HepG2 (cell line): ENCODE measurements at regions of chr5 and their contacts with region 1.

Region 1: GRCh38 chr5:140113699-140114263 is at the start of gene PURA:
- DNase-seq: peak; percentile 92
- ATAC-seq: peak; percentile 89
- H3K4me3 ChIP-seq: peak within 1 kb of the TSS; percentile 86 to 92 (median 89)
- H3K27ac ChIP-seq: peak within 1 kb of the TSS; percentile 88
- H3K4me1 ChIP-seq: peaks cover 73% of the 10 kb centered on the region
- H3K27me3 ChIP-seq: no peaks in the 10 kb centered on the region; a peak in 1 of 5 replicates
- CTCF ChIP-seq: peak; percentile 73
- EP300 ChIP-seq: no peak
- POLR2A ChIP-seq: no peak; a peak in 1 of 4 replicates
- RAD21 ChIP-seq: no peak
- total RNA-seq, gene PURA: 5.0 and 6.8 TPM in 2 replicates

Region 2: DNA sequence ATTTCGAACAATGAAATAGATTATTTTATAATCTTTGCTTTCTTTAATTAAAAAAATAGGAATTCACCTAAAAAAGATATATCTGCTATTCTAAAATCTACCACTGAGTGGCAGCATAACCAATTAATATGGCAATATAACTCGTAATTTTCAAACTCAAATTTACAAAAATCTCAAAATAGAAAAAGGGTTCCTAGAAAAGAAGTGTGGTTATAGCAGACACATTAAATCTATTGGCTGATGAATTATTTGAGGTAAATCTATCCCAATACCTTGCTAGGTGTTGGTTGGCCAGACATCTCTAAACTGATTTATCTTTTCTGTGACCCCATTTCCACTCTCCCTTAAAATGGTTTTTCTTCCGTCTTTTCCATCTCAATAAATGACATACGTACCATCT is 40.5 kb before region 1 on chr5:
- CTCF ChIA-PET with region 1: interaction called, 4 read pairs
- POLR2A ChIA-PET with region 1: no interaction called
- in situ Hi-C with region 1: no loop called
- intact Hi-C with region 1: loop called (anchors 5 kb)
- DNase-seq: no peak
- ATAC-seq: no peak
- H3K4me3 ChIP-seq: no peak overlapping the region
- H3K27ac ChIP-seq: no peak overlapping the region
- H3K4me1 ChIP-seq: no peaks in the 10 kb centered on the region
- H3K27me3 ChIP-seq: no peaks in the 10 kb centered on the region
- CTCF ChIP-seq: peak; percentile 32; the same call in 1 of the 2 replicates
- EP300 ChIP-seq: no peak
- POLR2A ChIP-seq: no peak
- RAD21 ChIP-seq: no peak

Region 3: GRCh38 chr5:140128376-140128775 is 14.6 kb after region 1 on chr5:
- CTCF ChIA-PET with region 1: no interaction called
- POLR2A ChIA-PET with region 1: no interaction called
- in situ Hi-C with region 1: no loop called
- intact Hi-C with region 1: no loop called
- DNase-seq: no peak
- ATAC-seq: no peak
- H3K4me3 ChIP-seq: no peak overlapping the region
- H3K27ac ChIP-seq: no peak overlapping the region
- H3K4me1 ChIP-seq: no peaks in the 10 kb centered on the region
- H3K27me3 ChIP-seq: no peaks in the 10 kb centered on the region; a peak in 1 of 5 replicates
- CTCF ChIP-seq: no peak
- EP300 ChIP-seq: no peak
- POLR2A ChIP-seq: no peak
- RAD21 ChIP-seq: no peak